ENCODE measurements at regions of chr1 and their contacts with region 1.

Region 1: DNA sequence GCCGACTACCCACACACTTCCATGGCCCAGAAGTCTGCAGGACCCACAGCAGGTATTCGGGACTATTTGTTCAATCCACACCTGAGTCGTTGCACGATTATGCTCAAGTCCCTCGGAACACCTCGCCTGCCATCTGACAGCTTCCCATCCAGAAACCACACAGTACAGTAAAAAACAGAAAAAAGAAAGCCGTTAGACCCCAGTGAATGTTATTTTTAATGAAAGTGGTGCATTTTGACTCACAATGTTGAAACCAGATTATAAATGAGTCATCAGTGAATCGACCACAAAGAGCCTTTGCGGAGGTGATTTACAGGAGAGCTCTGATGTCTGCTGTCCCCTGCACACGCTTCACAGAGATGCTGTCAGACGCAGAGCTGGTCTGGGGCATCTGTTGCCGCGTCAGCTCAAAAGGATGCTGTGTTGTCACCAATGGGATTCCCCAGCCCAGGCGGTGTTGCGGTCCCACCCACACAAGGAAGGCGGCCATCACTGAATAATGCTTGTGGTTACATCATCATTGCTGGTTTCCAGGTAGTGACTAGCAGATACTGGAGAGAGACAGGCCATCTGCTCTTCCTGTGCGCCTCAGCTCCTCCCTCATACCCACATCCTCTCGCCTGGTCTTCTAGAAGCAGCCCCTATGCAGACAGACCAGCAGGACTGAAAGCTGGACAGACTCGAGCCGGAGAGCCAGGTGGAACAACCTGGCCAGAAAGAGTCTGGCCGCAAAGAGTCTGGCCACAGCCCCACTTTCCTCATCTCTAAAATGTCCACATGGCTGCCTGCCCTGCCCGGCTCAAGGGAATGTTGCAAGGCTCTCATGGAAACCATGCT is 116.8 kb downstream of the TOMM20 start:
- DNase-seq: peak; percentile 99
- H3K4me3 Mint-ChIP-seq: peak overlapping the region; percentile 56
- H3K27ac Mint-ChIP-seq: peak overlapping the region; percentile 94
- H3K4me1 Mint-ChIP-seq: peaks cover 89% of the 10 kb centered on the region
- H3K27me3 Mint-ChIP-seq: no peaks in the 10 kb centered on the region

Region 2: GRCh38 chr1:234271243-234271606 is 740.6 kb before region 1 on chr1:
- CTCF ChIA-PET with region 1: no interaction called
- intact Hi-C with region 1: loop called (anchors 1 kb)
- DNase-seq: peak; percentile 22
- H3K4me3 Mint-ChIP-seq: no peak overlapping the region
- H3K27ac Mint-ChIP-seq: no peak overlapping the region
- H3K4me1 Mint-ChIP-seq: peaks cover 26% of the 10 kb centered on the region
- H3K27me3 Mint-ChIP-seq: peaks cover 28% of the 10 kb centered on the region

Region 3: DNA sequence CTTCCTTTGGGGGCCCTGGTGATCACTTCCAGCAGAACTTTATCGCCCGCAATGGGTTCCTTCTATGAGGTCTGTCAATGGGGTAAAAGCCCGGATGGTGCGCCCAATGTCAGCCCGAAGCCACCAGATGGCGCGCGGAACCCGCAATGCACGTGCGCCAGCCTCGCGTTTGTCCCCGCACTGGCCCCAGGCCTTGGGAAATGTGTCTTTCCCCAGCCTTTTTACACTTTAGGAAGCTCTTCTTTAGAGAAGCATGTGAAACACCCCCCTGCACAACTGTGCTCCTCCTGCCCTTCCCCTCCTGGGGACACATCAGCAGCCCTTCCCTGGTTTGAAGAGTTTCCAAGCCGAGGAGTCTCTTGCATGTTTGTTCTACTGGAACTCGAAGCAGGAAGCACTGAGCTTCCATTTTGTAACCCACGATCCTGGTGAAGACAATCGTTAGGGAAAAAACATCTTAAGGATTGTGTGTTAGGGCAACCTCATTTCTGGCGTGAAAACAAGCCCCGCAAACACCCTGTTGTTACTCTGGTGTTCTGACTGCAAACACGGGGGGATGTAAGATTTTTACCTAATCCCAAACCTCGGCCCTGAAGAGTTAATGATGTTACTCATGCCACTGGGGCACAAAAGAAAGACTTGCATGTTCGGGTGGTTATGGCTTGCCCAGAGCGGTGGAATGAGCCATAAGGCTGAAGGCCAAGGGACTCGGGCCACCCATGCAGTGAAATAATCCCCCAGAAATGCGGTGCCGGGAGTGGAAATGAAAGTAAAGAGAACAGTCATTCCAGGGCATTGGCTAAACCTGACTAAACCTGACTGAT is 512.5 kb before region 1 on chr1:
- CTCF ChIA-PET with region 1: interaction called, 3 read pairs
- intact Hi-C with region 1: loop called (anchors 1 kb)
- DNase-seq: peak; percentile 92
- H3K4me3 Mint-ChIP-seq: no peak overlapping the region
- H3K27ac Mint-ChIP-seq: peak overlapping the region; percentile 82
- H3K4me1 Mint-ChIP-seq: peaks cover 64% of the 10 kb centered on the region
- H3K27me3 Mint-ChIP-seq: no peaks in the 10 kb centered on the region

Region 4: DNA sequence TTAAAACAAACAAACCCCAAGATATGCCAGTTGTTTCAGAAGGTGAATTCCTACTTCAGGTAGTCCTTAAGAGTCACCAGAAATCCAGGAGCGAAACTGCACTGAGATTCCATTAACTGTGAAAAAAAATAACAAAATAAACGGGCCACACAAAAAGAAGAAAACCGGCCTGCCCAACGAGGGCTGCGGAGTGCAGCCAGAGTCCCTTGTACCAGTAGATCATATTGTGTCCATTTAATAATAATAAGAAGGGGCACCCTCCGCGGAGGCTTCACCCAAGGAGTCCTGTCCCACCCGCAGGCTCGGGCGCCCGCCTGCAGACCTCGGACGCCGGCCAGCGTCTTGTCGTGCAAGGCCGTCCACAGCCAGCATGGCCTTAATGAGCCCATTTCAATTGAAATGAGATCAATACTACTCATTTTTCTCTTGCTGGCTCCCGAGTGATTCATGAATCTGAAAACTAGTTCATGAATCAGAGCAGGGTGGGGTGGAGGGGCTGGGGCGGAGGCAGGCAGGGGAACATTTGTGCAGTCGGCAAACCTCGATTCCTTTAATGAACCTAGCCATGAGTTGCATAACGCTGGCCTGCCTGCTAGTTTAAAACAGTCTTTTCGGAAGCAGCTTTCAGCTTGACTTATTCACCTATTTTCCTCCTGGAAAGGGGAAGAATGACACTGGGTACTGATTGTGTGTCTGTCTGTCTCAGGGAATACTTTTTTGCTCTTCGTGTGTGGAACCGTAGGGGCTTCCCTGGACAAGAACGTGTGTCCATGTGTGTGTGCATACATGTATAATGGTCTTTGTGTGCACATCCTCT is 288.7 kb before region 1 on chr1:
- CTCF ChIA-PET with region 1: no interaction called
- intact Hi-C with region 1: loop called (anchors 1 kb)
- DNase-seq: peak; percentile 91
- H3K4me3 Mint-ChIP-seq: peak overlapping the region; percentile 70
- H3K27ac Mint-ChIP-seq: peak overlapping the region; percentile 97
- H3K4me1 Mint-ChIP-seq: peaks cover 61% of the 10 kb centered on the region
- H3K27me3 Mint-ChIP-seq: no peaks in the 10 kb centered on the region

Region 5: GRCh38 chr1:234925440-234926263 is 86.2 kb before region 1 on chr1:
- CTCF ChIA-PET with region 1: interaction called, 4 read pairs
- intact Hi-C with region 1: loop called (anchors 1 kb)
- DNase-seq: peak; percentile 40
- H3K4me3 Mint-ChIP-seq: peak overlapping the region; percentile 39
- H3K27ac Mint-ChIP-seq: peak overlapping the region; percentile 75
- H3K4me1 Mint-ChIP-seq: peaks cover 50% of the 10 kb centered on the region
- H3K27me3 Mint-ChIP-seq: no peaks in the 10 kb centered on the region

Region 6: DNA sequence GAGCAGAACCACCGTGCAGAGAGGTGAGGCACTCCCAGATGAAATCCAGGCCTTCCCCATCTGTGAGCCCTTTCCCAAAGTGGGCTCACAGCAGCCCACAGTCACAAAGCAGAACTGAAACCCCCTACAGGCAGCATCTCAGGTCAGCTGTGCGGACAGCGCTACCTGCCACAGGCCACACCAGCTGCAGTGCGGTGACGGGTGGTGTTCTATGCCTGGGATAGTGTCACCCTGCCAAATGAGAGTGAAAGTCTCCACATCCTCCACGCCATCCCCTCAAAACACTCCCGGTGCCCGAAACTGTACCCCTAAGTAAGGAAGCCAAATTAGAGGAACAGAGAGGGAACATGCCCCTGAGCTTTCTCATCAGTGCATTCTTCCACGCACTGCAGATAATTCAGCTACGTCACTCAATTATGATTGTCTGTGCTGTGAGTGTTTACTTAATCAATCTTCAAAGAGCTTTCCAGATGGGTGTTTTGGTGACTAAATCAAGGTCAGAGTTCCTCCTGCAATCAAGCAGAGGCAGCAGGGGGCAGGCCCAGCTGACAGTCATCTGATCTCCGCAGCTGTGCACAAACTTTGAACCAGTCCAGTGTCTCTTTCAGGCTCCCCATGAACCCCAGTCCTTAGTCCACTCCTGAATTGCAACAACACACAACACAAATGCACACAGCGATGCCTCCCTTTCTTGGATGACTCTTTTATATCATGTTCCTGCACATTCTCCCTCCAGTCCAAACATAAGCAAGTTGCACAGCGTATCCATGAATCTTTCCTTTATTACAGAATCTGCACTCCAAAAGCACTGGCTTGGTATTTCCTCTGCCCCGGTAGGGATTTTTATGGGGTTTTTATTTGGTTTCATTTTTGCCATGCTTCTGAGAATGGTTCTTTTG is 33.2 kb before region 1 on chr1:
- CTCF ChIA-PET with region 1: interaction called, 7 read pairs
- intact Hi-C with region 1: loop called (anchors 1 kb)
- DNase-seq: peak; percentile 81
- H3K4me3 Mint-ChIP-seq: peak overlapping the region; percentile 79
- H3K27ac Mint-ChIP-seq: peak overlapping the region; percentile 97
- H3K4me1 Mint-ChIP-seq: peaks cover 59% of the 10 kb centered on the region
- H3K27me3 Mint-ChIP-seq: no peaks in the 10 kb centered on the region

Region 7: GRCh38 chr1:235866913-235867845 is 855.4 kb after region 1 on chr1:
- CTCF ChIA-PET with region 1: no interaction called
- intact Hi-C with region 1: loop called (anchors 5 kb)
- DNase-seq: peak; percentile 98
- H3K4me3 Mint-ChIP-seq: peak overlapping the region; percentile 91
- H3K27ac Mint-ChIP-seq: peak overlapping the region; percentile 94
- H3K4me1 Mint-ChIP-seq: peaks cover 45% of the 10 kb centered on the region
- H3K27me3 Mint-ChIP-seq: no peaks in the 10 kb centered on the region